ENCODE measurements at regions of chr15 and their contacts with region 1.

Region 1: DNA sequence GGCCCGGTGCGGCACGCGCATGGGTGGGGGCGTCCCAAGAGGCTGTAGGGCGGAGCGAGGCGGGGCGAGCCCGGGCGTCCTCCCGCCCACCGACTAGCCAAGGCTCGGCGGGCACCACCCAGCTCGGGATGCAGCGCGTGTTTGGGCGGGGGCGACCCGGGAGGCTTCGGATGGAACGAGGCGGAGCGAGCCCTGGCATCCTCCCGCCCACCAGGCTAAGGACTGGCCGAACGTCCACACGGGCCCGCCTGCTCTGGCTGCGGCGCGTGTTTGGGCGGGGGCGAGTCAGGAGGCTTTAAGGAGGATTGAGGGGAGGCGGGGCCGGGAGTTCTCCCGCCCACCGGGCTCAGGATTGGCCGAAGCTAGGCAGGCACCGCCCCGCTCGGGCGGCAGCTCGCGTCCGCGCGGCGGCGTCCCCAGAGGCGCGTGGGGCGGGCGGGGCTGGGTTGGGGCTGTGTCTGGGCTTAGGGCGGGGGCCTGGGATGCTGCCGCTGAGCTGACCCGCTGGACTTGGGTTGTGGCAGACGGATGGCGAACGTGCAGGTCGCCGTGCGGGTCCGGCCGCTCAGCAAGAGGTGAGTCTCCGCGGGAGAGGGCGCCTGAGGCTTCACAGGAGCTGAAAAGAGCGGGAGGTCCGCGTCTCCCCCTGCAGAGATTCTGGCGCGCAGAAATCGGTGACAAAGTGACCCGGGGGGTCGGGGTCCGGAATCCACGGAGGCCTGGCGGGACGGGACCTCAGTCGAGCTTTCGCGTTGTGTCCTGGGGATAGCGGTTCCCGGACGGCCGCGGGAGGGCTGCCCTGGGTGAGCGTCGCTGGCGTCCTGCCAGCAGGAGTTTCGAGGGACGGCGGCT is at the start of gene STARD9:
- DNase-seq: peak; percentile 99
- H3K4me3 Mint-ChIP-seq: peak within 1 kb of the TSS; percentile 93
- H3K27ac Mint-ChIP-seq: peak within 1 kb of the TSS; percentile 82
- H3K4me1 Mint-ChIP-seq: peaks cover 26% of the 10 kb centered on the region
- H3K27me3 Mint-ChIP-seq: peaks cover 25% of the 10 kb centered on the region
- total RNA-seq, gene STARD9: 7.2 and 8.8 TPM in 2 replicates

Region 2: DNA sequence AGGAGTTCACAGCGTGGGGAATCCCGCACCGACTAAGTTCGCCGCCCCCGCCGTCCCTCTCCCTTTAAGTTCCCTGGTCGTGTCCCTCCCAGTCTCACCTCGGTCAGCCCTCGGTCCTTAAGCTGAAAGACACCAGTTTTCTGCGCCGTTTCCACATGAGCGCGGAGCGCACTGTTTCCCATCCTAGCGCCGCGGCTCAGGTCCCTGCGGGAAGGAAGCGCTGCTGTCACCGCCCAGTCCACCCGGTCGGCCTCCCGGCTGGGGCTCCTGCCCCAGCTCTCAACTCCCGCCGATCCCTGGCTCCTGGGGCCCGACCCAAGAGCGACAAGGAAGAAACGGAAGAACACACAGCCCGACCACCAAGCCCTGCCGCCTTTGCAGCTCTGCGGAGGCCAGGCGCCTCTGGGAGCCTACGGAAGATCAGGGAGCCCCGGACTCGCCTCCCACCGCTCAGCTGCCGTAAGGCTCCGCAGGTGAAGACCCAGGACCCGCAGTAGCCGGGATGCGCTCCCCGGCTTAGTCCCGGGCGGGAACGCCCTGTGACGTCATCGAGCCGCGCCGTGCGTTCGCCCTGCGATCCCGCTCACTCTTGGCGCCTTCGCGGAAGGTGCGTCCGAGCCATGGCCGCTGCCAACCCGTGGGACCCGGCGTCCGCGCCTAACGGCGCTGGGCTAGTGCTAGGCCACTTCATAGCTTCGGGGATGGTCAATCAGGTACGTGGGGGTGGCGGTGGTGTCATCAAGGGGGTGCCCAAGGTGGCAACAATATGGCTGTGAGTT is 27.0 kb before region 1 on chr15 and contains the starts of genes HAUS2 and LRRC57:
- intact Hi-C with region 1: loop called (anchors 1 kb)
- DNase-seq: peak; percentile 97
- H3K4me3 Mint-ChIP-seq: peak within 1 kb of the TSS; percentile 96
- H3K27ac Mint-ChIP-seq: peak within 1 kb of the TSS; percentile 95
- H3K4me1 Mint-ChIP-seq: peaks cover 46% of the 10 kb centered on the region
- H3K27me3 Mint-ChIP-seq: no peaks in the 10 kb centered on the region
- total RNA-seq, gene HAUS2: 41.1 and 48.0 TPM in 2 replicates
- total RNA-seq, gene LRRC57: 19.0 and 21.1 TPM in 2 replicates

Region 3: DNA sequence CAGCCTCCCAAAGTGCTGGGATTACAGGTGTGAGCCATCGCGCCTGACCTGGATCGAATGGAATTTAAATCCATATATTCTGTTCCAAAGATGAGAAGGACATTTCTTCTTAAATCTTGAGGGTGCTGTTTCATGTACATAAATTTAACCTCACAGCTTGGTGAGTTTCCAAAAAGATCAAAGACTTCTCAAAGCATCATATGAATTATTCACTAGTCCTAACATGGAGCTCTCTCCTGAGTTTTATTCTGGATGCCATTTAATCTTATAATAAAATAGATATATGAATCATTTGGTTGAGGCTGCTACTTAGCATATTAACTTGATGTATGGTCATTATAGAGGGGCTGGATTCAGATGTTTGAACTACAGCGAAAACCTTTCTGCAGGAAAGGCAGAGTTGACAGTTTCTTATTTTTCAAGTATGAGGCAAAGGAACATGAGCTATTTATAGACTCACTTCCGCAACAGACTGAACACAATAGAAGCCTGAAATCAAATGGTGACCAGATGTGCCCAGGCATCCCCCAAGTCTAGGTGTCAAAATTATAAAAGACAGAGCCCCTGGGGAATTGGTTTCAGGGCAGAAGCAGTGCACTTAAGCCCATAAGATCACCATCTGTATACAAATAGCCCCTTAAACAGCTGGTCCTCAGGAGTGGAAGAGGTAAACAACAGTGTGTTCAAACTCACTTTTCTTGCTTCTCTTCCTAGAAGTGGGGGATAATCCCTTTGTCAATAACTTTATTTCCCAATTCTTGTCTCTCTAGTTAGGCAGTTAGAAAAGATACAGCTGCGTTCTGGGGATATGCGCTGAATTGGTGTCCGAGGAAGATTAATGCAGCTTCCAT is 29.7 kb after region 1 on chr15:
- intact Hi-C with region 1: loop called (anchors 1 kb)
- DNase-seq: peak; percentile 68
- H3K4me3 Mint-ChIP-seq: peak overlapping the region; percentile 55
- H3K27ac Mint-ChIP-seq: peak overlapping the region; percentile 90
- H3K4me1 Mint-ChIP-seq: peaks cover 47% of the 10 kb centered on the region
- H3K27me3 Mint-ChIP-seq: no peaks in the 10 kb centered on the region

Measured in activated CD4-positive, alpha-beta T cell treated with anti-CD3 and anti-CD28 coated beads, Interleukin-2, amount 10 ng/mL, durations not matched to agents 24 days and 14 days (primary cell).